IMR-90 (cell line): ENCODE measurements at regions of chr6 and their contacts with region 1.

Region 1: GRCh38 chr6:15621203-15622044 is 41.4 kb downstream of the DTNBP1 start:
- DNase-seq: peak; percentile 30
- ATAC-seq: peak; percentile 72
- H3K4me3 ChIP-seq: no peak overlapping the region
- H3K27ac ChIP-seq: no peak overlapping the region
- H3K4me1 ChIP-seq: peaks cover 7% of the 10 kb centered on the region
- H3K27me3 ChIP-seq: no peaks in the 10 kb centered on the region
- CTCF ChIP-seq: no peak
- POLR2A ChIP-seq: no peak
- RAD21 ChIP-seq: no peak

Region 2: GRCh38 chr6:14129575-14129974 is 1491.8 kb before region 1 on chr6:
- CTCF ChIA-PET with region 1: no interaction called
- POLR2A ChIA-PET with region 1: no interaction called
- dilution Hi-C with region 1: no loop called
- in situ Hi-C with region 1: no loop called
- intact Hi-C with region 1: loop called (anchors 5 kb)
- DNase-seq: peak; percentile 80
- ATAC-seq: peak; percentile 99
- H3K4me3 ChIP-seq: no peak overlapping the region
- H3K27ac ChIP-seq: no peak overlapping the region
- H3K4me1 ChIP-seq: no peaks in the 10 kb centered on the region
- H3K27me3 ChIP-seq: no peaks in the 10 kb centered on the region
- CTCF ChIP-seq: peak; percentile 55
- POLR2A ChIP-seq: no peak
- RAD21 ChIP-seq: peak; percentile 74

Region 3: DNA sequence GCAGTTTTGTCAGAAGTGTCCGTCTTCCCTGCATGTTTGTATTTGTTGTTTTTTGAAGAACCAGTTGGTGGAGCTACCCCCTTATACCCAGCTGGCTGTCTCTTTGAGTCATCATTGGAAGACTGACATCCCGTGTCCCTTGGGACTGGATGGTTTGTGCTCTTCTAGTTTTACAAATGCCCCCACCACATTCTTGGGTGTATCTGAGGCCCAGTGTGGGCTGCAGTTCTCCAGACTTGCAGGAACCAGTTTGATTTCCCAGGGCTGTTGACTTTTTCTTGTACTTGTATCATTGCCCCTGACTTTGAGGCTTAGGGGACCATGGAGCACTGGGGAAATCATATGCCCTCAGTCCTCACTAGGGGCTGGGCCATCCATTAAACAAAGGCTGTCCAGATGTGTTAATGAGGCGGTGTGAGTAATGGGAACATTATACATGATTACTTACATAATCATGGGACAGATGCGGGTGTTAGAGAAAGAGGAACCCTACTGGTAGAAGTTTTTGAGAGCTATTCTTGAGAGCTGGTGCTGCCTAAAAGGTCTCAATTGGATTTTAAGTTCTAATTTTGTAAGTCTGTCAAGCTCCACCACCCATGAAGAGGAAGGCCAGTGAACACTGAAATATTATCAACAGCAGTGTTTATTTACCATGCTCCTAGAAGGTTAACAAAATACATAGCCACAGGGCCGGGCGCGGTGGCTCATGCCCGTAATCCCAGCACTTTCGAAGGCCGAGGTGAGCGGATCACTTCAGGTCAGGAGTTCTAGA is 367.2 kb before region 1 on chr6:
- CTCF ChIA-PET with region 1: interaction called, 4 read pairs
- POLR2A ChIA-PET with region 1: no interaction called
- dilution Hi-C with region 1: no loop called
- in situ Hi-C with region 1: loop called (anchors 25 kb)
- intact Hi-C with region 1: no loop called
- DNase-seq: no peak
- ATAC-seq: no peak
- H3K4me3 ChIP-seq: no peak overlapping the region
- H3K27ac ChIP-seq: no peak overlapping the region
- H3K4me1 ChIP-seq: peaks cover 10% of the 10 kb centered on the region
- H3K27me3 ChIP-seq: no peaks in the 10 kb centered on the region
- CTCF ChIP-seq: 0 out of 2 replicates have a peak, but pooled peaks have one; percentile 4
- POLR2A ChIP-seq: no peak
- RAD21 ChIP-seq: no peak

Region 4: DNA sequence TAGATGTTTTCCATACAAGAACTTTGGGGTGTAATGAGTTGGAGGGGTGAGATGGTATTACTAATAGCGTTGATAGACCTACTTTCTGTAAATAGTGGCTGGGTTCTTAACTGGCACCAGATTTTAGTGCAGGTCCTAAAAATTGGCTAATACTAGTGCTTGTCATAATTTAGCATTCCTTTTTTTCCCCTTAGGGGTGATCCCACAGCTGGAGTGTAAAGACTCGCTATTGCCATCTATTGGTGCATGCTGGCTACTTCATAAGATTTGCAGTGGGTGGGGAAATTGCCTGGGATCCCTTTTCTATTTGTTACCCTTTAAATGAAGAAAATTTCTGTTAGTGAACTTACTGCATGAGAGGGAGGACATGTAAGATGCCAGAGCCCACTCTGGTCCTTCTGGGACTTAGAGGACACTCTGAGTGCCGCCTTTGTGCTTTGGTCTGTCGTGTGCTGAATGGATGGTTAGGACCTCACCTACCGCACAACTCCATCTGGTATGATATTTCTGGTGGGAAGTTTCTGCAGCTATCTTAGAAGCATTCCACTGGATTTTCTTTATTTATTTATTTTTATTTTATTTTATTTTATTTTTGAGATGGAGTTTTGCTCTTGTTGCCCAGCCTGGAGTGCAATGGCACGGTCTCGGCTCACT is 180.1 kb before region 1 on chr6:
- CTCF ChIA-PET with region 1: interaction called, 5 read pairs
- POLR2A ChIA-PET with region 1: no interaction called
- dilution Hi-C with region 1: no loop called
- in situ Hi-C with region 1: no loop called
- intact Hi-C with region 1: loop called (anchors 1 kb)
- DNase-seq: peak; percentile 78
- ATAC-seq: peak; percentile 63
- H3K4me3 ChIP-seq: no peak overlapping the region
- H3K27ac ChIP-seq: no peak overlapping the region
- H3K4me1 ChIP-seq: peaks cover 19% of the 10 kb centered on the region
- H3K27me3 ChIP-seq: no peaks in the 10 kb centered on the region
- CTCF ChIP-seq: peak; percentile 84
- POLR2A ChIP-seq: no peak
- RAD21 ChIP-seq: peak; percentile 83

Region 5: DNA sequence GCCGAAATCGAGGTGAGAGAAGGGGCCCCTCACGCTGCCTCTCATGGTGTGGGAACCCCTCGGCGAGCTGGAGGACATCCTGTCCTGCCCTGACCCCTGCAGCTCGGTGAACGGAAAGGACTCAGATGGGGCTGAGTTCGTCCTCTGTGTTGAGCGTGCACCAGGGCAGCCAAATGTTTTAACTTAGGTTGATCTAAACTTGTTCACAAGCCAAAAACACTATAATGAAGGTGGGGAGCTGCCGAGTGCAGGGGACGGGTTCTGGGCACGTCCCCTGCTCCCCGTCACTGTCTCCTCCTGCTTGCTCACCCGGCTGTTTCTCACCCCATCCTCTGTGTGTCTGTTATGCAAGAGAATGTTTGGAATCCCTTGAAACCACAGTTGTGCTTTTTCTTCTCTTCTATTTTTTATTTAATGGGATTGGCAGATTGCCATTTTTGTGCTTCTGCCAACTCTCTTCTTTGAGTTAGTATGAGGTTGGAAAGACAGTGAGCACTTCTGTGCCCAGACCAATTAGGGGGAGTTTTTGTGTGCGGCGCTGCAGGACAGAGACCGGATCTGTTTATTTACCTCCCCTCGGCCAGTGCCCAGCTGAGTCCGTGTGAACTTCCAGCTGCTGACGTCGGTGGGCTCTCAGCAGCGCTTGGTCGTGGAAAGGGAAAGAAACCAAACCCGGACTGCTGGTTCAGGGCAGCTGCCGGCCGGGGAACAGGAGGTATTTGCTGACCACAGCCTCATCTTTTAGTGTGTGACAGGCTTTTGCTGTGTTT is 116.7 kb before region 1 on chr6:
- CTCF ChIA-PET with region 1: interaction called, 3 read pairs
- POLR2A ChIA-PET with region 1: no interaction called
- dilution Hi-C with region 1: no loop called
- in situ Hi-C with region 1: no loop called
- intact Hi-C with region 1: loop called (anchors 5 kb)
- DNase-seq: peak; percentile 98
- ATAC-seq: peak; percentile 83
- H3K4me3 ChIP-seq: peak overlapping the region; percentile 2; the same call in 1 of the 2 replicates
- H3K27ac ChIP-seq: peak overlapping the region; percentile 23; the same call in 1 of the 2 replicates
- H3K4me1 ChIP-seq: peaks cover 36% of the 10 kb centered on the region
- H3K27me3 ChIP-seq: no peaks in the 10 kb centered on the region
- CTCF ChIP-seq: 0 out of 2 replicates have a peak, but pooled peaks have one; percentile 19
- POLR2A ChIP-seq: peak; percentile 17; the same call in 1 of the 2 replicates
- RAD21 ChIP-seq: peak; percentile 21; the same call in 1 of the 2 replicates